ENCODE measurements at regions of chr7 and their contacts with region 1.

Region 1: GRCh38 chr7:42931834-42932651 is at the starts of genes MRPL32 and PSMA2:
- DNase-seq: peak; percentile 98
- total RNA-seq, gene MRPL32: 51.3 TPM
- total RNA-seq, gene PSMA2: 64.8 TPM

Region 2: DNA sequence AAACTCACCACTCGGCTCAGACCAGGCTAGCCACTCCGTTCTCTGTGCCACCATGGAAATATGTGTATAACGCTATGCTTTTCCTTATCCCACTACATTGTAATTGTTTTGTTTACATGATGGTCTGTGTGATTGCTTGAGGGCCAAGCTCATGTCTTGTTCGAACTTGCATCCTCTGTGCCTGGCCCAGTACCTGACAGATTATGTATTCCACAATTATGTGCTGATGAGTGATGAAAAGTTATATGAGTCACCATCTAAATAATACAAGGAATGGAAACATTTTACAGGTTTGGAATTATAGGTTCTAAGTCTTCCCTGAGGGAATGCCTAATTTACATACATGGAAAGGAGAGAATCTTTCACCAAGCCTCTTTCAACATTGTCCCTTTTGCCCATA is 157.6 kb before region 1 on chr7:
- intact Hi-C with region 1: no loop called
- DNase-seq: no peak

Region 3: DNA sequence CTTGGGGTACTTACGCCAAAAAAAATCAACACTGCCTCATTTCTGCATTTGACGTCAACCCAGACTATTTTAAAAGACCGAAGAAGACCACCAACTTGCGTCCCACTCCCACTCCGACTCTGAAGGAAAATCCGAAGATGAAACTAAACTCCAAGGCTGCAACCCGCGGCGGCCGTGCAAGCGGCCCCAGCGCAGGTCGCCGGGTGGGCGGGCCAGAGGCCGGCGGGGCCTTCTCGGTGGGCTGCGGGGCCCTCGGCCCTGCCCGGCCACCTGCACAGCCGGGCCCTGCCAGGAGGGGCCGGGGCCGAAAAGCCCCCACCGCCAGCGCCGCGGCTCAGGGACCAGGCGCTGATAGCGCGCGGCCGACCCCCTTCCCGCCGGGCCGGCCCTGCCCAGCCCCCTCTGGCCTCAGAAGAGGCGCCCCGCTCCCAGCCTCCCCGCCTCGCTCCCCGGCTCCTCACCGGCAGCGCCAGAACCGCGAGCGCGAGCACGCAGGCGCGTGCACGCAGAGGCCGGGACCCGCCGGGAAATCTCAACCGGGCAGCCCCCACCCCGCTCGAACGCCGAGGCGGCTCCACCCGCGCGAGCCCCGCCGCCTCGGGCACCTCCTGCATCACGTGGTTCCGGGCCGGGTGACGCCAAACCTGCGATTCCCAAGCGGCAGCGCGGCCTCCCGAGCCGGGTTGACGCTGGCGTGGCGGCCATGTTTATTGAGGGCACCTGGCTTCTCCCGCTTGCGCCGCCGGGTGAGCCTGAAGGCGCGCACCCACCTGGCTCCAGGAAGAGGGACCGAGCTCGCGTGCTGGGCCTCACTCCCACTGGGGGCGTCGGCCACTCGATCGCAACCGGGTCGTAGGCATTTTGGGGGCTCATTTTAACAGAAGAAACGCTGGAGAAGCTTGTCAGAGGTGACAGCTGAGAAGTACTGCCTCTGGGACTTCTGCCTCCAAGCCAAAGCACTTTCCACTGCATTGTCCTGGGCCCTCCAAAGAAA is 20.3 kb before region 1 on chr7 and contains the start of gene C7orf25:
- intact Hi-C with region 1: loop called (anchors 2 kb)
- DNase-seq: peak; percentile 99
- total RNA-seq, gene C7orf25: 5.2 TPM

Region 4: DNA sequence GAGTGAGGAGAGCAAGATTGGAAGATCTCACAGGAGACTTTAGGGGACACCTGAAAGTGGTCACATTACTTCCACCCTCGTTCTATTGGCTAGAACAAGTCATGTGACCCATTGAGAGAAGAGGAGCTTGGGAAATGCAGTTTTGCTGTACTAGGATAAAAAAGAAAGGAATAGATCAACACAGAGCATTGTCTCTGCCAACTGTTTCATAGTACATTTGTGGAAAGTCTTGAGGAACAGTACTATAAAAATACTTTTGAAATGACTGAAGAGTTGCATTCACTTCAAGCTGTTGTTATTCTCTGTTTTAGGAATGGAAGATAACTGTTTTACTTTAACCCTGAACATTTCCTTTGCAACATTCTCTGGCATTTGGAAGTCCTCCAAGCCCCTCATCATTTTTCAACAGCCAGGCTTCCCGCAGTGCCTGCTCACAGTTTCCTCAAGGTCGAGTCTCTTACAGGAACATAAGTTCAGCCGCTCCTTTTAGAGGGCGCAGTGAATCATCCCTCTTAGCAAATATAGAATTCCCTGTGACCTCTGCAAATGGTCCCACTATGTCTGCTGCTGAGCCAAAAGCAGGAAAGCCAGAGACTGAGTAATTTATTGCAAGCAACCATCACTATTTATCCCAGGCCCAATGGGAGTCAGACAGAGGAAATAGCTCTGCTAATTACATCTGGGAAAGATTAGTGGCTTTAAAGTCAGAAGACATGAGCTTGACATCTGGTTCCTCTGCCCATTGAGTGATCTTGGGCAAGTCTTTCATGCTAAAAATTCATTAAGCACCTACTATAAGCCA is 40.9 kb after region 1 on chr7:
- intact Hi-C with region 1: loop called (anchors 5 kb)
- DNase-seq: no peak